ENCODE measurements at regions of chr2 and their contacts with region 1.

Region 1: DNA sequence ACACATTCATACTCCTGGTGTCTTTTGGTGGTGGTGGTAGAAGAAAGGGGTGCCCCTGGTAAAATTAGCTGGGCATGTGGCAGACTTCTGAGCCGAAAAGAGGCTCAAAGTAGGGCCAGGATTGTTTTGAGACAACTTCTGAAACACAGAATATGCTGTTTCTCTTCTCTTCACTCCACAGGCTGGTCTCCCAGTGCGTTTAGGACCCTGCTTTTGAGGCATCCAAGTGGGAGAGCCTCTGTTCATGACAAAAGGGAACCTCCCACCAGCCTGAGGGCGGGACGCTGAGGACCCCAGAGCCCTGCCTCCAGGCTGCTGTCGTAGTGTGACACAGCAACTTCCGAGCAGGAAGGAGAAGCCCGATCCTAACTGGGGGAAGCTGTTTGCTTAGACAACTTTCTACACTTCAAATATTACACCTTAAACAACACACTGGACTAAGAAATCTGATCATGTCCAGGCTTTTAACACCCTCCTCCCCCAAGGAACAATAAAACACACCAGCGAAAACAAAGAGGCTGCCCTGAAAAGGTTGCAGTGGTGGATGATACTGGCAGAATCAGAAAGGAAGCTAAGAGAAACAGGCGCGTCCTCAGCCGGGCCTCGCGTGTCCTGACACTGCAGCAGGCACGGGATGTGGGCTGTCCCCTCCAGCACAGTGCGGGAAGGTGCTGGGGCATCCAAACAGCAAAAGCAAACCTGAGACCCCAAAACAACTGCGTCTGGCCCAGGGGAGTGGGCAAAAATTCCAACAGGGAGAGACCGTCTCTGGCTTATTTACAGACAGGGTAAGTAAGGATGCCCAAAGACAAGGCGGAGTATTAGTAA is 9.3 kb downstream of the SERTAD2 start:
- DNase-seq: peak; percentile 53
- ATAC-seq: peak; percentile 90
- H3K4me3 ChIP-seq: peak overlapping the region; percentile 44 to 72
- H3K27ac ChIP-seq: peak overlapping the region; percentile 98
- H3K4me1 ChIP-seq: peaks cover 78% of the 10 kb centered on the region
- H3K27me3 ChIP-seq: no peaks in the 10 kb centered on the region
- CTCF ChIP-seq: no peak

Region 2: GRCh38 chr2:64594226-64594989 is 50.0 kb before region 1 on chr2:
- CTCF ChIA-PET with region 1: interaction called, 11 read pairs
- POLR2A ChIA-PET with region 1: no interaction called
- in situ Hi-C with region 1: no loop called
- intact Hi-C with region 1: no loop called
- DNase-seq: no peak
- ATAC-seq: no peak
- H3K4me3 ChIP-seq: no peak overlapping the region
- H3K27ac ChIP-seq: no peak overlapping the region
- H3K4me1 ChIP-seq: no peaks in the 10 kb centered on the region
- H3K27me3 ChIP-seq: no peaks in the 10 kb centered on the region
- CTCF ChIP-seq: no peak

Region 3: GRCh38 chr2:64865073-64865830 is 220.9 kb after region 1 on chr2:
- CTCF ChIA-PET with region 1: interaction called, 3 read pairs
- POLR2A ChIA-PET with region 1: no interaction called
- in situ Hi-C with region 1: no loop called
- intact Hi-C with region 1: loop called (anchors 2 kb)
- DNase-seq: no peak
- ATAC-seq: peak; percentile 93
- H3K4me3 ChIP-seq: peak overlapping the region; percentile 51 to 74
- H3K27ac ChIP-seq: peak overlapping the region; percentile 39
- H3K4me1 ChIP-seq: peaks cover 26% of the 10 kb centered on the region
- H3K27me3 ChIP-seq: no peaks in the 10 kb centered on the region
- CTCF ChIP-seq: peak; percentile 99